Ascending aorta (tissue), 2 donors: ENCODE measurements at regions of chr3 and their contacts with region 1.

Region 1: DNA sequence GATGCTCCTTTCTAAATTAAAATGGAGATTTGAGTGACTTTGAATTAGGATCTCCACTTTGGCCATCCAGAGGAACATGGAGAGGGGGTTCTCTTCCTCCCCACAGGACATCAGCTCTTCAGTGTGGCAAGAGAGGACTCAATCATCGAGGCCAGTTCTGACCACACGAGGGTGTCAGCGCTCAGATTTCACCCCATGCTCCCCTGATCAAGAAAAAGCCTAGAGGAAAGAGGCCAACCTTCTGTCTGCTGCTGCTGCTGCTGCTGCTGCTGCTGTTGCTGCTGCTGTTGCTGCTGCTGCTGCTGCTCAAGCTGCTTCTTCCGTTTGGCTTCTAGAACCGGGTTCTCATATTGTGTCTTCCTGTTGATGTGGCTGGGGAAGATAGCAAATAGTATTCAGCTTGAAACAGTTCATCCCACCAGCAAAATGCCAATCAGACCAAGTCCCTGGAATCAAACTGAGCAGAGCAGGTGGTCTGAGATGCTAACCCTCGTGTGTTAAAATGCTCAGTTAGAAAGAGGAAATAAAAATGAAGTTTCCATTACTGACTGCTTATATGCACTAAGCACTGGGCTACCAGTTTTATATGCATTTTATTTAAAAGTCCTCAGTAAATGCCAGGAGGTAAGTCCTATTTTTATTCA is 599.0 kb downstream of the MAGI1 start:
- DNase-seq: no peak
- H3K4me3 ChIP-seq: no peak overlapping the region
- H3K27ac ChIP-seq: no peak overlapping the region
- H3K4me1 ChIP-seq: no peaks in the 10 kb centered on the region
- H3K27me3 ChIP-seq: no peaks in the 10 kb centered on the region
- CTCF ChIP-seq: peak; percentile 27 to 64 (median 44)

Region 2: GRCh38 chr3:65485826-65486469 is 46.2 kb after region 1 on chr3:
- intact Hi-C with region 1: no loop called
- DNase-seq: no peak
- H3K4me3 ChIP-seq: no peak overlapping the region
- H3K27ac ChIP-seq: no peak overlapping the region
- H3K4me1 ChIP-seq: peaks cover 9 to 42% of the 10 kb centered on the region in 2 donors
- H3K27me3 ChIP-seq: no peaks in the 10 kb centered on the region
- CTCF ChIP-seq: no peak

Region 3: DNA sequence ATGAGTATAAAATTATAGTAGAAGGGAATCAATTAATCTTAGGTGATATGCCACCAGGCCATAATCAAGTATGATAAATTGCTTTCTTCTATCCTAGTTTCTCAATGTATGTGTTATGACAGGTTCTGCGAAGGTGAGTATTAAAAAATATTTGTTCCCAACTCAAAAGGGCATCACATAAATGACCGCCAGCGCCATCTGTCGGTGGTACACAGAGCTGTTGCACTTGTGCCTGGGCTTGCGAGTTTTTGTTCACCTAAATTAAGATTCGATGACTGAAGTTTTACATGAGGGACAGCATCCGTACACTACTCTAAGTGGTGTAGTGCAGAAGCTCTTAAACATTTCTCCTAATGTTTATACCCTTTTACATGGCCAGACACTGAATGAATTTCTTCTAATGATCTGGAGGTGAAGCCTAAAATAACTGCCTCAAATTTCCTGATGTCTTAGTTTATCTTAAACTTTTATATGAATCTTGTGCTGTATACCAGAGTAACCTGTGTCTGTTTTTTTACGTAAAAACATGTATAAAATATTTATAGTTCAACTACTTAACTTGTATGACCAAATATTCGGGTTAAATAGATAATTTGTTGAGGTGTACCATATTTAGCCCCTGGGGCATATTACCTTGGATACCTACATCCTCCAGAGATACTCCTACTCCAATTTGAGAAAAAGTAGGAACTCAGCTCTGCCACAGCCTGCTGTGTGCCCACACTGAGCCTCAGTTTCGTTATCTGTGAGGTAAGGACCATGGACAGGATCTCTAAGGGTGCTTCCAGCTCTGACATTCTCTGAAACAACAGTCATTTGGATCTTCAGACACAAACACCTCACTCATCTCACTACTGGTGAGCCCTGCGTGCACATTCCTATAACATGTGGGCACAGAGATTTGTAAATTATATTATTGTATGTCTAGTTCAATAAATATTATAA is 233.4 kb after region 1 on chr3:
- intact Hi-C with region 1: loop called (anchors 2 kb)
- DNase-seq: no peak
- H3K4me3 ChIP-seq: no peak overlapping the region
- H3K27ac ChIP-seq: no peak overlapping the region
- H3K4me1 ChIP-seq: peaks cover 0 to 3% of the 10 kb centered on the region in 2 donors
- H3K27me3 ChIP-seq: no peaks in the 10 kb centered on the region
- CTCF ChIP-seq: peak; percentile 33 to 69 (median 58)

Region 4: DNA sequence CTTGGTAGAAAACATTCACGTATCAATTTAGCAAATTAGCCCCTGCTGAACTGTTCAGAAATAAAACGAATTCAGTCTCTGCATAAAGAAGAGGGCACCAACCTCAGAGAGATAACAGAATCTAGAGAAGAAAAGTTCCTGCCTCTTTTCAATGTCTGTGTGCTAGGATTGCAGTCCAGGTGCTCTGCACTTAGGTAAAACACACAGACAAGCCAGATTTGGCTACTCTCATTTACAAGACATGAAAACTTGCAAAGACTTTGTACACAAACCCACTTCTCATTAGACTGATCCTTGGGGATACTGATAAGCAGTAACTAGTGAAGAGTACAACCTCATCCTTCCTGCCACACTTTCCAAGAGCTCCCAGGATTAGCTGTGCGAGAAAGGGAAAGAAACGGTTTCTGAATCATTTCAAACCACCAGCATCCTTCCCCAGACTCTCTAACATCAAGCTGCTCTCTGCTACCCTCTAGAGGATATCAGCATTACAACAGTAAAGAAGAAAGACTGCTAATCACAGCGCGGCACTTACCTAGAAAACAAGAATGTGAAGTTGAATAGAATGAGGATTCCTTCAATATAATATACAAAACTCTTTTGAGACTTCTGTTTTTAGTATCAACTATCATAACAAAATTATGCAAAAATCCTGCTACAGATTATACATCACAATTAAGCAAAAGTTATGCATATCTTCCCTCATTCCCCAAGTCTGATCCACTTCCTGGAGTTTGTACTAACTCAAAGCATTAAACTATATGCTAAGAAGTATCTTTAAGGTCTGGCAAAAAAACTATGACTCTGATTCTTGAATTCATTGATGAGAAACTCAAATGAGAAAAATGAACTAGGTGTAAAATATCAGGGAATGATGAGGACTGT is 292.5 kb after region 1 on chr3:
- intact Hi-C with region 1: loop called (anchors 1 kb)
- DNase-seq: no peak
- H3K4me3 ChIP-seq: no peak overlapping the region
- H3K27ac ChIP-seq: no peak overlapping the region
- H3K4me1 ChIP-seq: peaks cover 7 to 13% of the 10 kb centered on the region in 2 donors
- H3K27me3 ChIP-seq: no peaks in the 10 kb centered on the region
- CTCF ChIP-seq: peak; percentile 45 to 83 (median 72)